ENCODE measurements at regions of chr2 and their contacts with region 1.

Region 1: GRCh38 chr2:197191177-197191939 is 119.2 kb downstream of the ANKRD44 start:
- DNase-seq: no peak
- H3K4me3 Mint-ChIP-seq: peak overlapping the region; percentile 19
- H3K27ac Mint-ChIP-seq: peak overlapping the region; percentile 85
- H3K4me1 Mint-ChIP-seq: peaks cover 74% of the 10 kb centered on the region
- H3K27me3 Mint-ChIP-seq: no peaks in the 10 kb centered on the region

Region 2: DNA sequence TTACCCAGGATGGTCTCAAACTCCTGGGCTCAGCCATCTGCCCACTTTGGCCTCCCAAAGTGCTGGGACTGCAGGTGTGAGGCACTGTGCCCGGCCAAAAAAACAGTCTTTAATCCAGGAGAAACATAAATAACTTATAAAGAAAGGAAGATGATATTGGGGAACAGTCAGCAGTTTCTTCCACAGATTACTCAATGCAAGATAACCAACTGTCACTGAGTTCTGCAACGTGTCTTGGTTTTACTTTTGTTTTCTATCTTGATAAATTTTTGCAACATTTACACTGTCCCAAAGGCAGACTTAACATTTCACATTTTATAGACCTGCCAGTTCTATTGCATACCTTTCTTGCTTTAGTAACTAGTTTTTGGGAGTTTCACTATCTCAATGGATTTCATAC is 48.1 kb after region 1 on chr2:
- CTCF ChIA-PET with region 1: interaction called, 4 read pairs
- intact Hi-C with region 1: loop called (anchors 1 kb)
- DNase-seq: no peak
- H3K4me3 Mint-ChIP-seq: peak overlapping the region; percentile 78
- H3K27ac Mint-ChIP-seq: peak overlapping the region; percentile 91
- H3K4me1 Mint-ChIP-seq: peaks cover 85% of the 10 kb centered on the region
- H3K27me3 Mint-ChIP-seq: no peaks in the 10 kb centered on the region

Region 3: DNA sequence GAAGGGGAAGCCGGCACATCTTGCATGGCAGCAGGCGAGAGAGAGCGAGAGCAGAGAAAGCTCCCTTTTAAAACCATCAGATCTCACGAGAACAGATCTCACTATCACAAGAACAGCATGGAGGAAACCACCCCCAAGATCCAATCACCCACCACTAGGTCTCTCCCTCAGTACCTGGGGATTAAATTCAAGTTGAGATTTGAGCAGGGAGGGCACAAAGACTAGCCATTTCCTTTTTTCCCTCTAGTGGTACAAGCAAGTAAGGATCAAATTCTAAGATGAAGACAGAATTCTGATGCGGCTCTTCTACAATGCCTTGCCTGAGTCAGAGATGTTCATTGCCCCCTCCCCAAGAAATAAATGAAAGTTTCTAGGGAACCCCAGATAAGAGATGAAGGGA is 164.8 kb after region 1 on chr2:
- CTCF ChIA-PET with region 1: interaction called, 13 read pairs
- intact Hi-C with region 1: loop called (anchors 1 kb)
- DNase-seq: no peak
- H3K4me3 Mint-ChIP-seq: peak overlapping the region; percentile 17
- H3K27ac Mint-ChIP-seq: no peak overlapping the region
- H3K4me1 Mint-ChIP-seq: peaks cover 28% of the 10 kb centered on the region
- H3K27me3 Mint-ChIP-seq: no peaks in the 10 kb centered on the region

Region 4: DNA sequence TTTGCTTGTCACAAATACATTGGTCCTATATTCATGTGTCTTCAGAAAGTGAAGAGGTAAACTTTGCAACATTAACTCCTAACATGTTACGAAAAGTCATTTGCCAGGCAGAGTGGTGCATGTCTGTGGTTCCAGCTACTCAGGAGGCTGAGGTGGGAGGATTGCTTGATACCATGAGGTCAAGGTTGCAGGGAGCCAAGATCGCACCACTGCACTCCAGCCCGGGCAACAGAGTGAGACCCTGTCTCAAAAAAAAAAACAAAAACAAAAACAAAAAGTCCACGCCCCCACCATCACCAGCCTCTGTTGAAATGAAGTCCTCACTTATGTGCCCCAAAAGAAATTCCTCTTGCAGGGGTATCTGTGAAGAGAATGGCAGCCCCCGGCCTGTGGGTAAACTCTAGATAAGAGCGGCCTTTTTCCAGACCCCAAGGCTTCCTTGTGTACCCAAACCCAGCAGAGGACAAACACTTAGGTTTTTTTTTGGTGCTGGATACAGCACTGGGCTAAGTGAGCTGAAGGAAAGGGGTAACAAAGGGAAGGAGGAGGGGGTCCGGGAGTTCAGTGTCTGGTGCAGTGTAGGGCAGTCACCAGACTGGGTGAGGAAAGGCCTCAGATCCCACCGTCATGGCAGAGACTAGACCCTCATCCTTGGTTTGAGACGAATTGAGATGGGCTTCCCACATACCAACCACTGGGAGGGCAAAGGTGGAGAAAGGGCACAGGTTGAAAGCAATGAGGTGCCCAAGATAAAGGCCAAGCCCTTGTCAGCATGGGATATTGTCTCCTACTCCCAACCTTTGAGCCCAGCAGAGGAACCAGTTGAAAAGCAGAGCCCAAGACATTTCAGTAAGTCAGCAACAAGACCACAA is 289.0 kb after region 1 on chr2:
- CTCF ChIA-PET with region 1: no interaction called
- intact Hi-C with region 1: no loop called
- DNase-seq: no peak
- H3K4me3 Mint-ChIP-seq: no peak overlapping the region
- H3K27ac Mint-ChIP-seq: no peak overlapping the region
- H3K4me1 Mint-ChIP-seq: peaks cover under 1% of the 10 kb centered on the region
- H3K27me3 Mint-ChIP-seq: no peaks in the 10 kb centered on the region

Region 5: GRCh38 chr2:197777823-197778407 is 586.6 kb after region 1 on chr2:
- CTCF ChIA-PET with region 1: no interaction called
- intact Hi-C with region 1: loop called (anchors 5 kb)
- DNase-seq: peak; percentile 52
- H3K4me3 Mint-ChIP-seq: no peak overlapping the region
- H3K27ac Mint-ChIP-seq: no peak overlapping the region
- H3K4me1 Mint-ChIP-seq: no peaks in the 10 kb centered on the region
- H3K27me3 Mint-ChIP-seq: peaks cover 5% of the 10 kb centered on the region